Left ventricle myocardium superior (tissue), 1 donor: ENCODE measurements at regions of chr3 and their contacts with region 1.

Region 1: GRCh38 chr3:159260049-159260662 is 458.3 kb downstream of the MFSD1 start:
- DNase-seq: no peak
- ATAC-seq: no peak

Region 2: GRCh38 chr3:158845765-158846350 is 414.3 kb before region 1 on chr3:
- intact Hi-C with region 1: loop called (anchors 2 kb)
- DNase-seq: no peak
- ATAC-seq: peak; percentile 38

Region 3: DNA sequence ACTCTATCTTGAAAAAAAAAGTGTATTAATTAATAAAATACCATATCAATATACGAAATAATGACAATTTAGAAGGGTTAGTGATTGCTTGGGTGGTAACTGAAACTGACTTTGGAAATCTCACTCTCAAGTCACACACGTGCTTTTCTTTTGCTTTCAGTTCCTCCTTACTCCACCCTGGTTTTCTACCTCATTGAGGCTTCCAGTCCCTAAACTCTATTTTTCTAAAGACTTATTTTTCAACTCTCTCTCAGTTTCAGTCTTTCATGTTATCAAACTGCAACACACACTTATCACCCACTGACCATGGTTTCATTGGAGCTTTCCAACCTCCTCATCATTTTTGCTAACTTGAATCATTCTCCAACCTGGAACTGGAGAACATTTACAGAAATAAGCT is 752.0 kb after region 1 on chr3:
- intact Hi-C with region 1: loop called (anchors 10 kb)
- DNase-seq: no peak
- ATAC-seq: no peak